ENCODE measurements at regions of chr1 and their contacts with region 1.

Region 1: GRCh38 chr1:150067184-150068036 is at the start of gene VPS45:
- DNase-seq: peak; percentile 87
- total RNA-seq, gene VPS45: 12.6 and 15.6 TPM in 2 replicates

Region 2: DNA sequence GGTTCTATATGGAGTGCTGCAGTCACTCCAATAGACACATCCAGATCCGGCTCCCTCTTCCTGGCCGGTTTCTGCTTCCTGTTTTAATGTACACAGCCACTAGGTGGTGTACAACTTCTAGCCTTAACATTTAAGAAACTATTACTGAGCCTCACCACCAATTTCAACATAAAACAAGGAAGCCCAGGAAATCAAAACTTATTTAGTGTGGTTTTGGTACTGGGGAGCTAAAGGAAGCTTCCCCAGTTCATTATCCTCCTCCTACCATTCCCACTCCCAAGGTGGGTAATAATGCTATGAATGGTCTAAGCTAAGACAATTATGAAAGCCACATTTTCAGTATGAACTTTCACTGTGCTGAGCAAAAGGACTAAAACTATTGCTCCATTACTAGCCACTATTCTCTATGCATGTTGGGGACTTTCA is 105.3 kb before region 1 on chr1:
- in situ Hi-C with region 1: loop called (anchors 10 kb)
- DNase-seq: peak; percentile 70

Region 3: GRCh38 chr1:150138044-150138443 is 70.6 kb after region 1 on chr1:
- in situ Hi-C with region 1: no loop called
- DNase-seq: no peak

Region 4: GRCh38 chr1:150186789-150187559 is 119.6 kb after region 1 on chr1:
- in situ Hi-C with region 1: loop called (anchors 25 kb)
- DNase-seq: peak; percentile 67